ENCODE measurements at regions of chr16 and their contacts with region 1.

Region 1: GRCh38 chr16:55832758-55833540 is at the start of gene CES1:
- DNase-seq: peak; percentile 94 to 95
- H3K4me3 ChIP-seq: peak within 1 kb of the TSS; percentile 45
- H3K4me3 Mint-ChIP-seq: peak within 1 kb of the TSS; percentile 78
- H3K27ac Mint-ChIP-seq: peak within 1 kb of the TSS; percentile 77
- H3K4me1 ChIP-seq: peaks cover 20% of the 10 kb centered on the region
- H3K4me1 Mint-ChIP-seq: peaks cover 42% of the 10 kb centered on the region
- H3K27me3 ChIP-seq: no peaks in the 10 kb centered on the region
- H3K27me3 Mint-ChIP-seq: no peaks in the 10 kb centered on the region
- CTCF ChIP-seq: no peak
- total RNA-seq, gene CES1: 74.1 and 97.4 TPM in 2 replicates

Region 2: GRCh38 chr16:55760310-55761001 is 72.5 kb before region 1 on chr16:
- CTCF ChIA-PET with region 1: no interaction called
- POLR2A ChIA-PET with region 1: interaction called, 4 read pairs
- intact Hi-C with region 1: loop called (anchors 2 kb)
- DNase-seq: peak; percentile 47 to 57
- H3K4me3 ChIP-seq: peak overlapping the region; percentile 18
- H3K4me3 Mint-ChIP-seq: peak overlapping the region; percentile 63
- H3K27ac Mint-ChIP-seq: no peak overlapping the region
- H3K4me1 ChIP-seq: 0 out of 2 replicates have a peak, but pooled peaks cover 4% of the 10 kb centered on the region
- H3K4me1 Mint-ChIP-seq: no peaks in the 10 kb centered on the region
- H3K27me3 ChIP-seq: no peaks in the 10 kb centered on the region
- H3K27me3 Mint-ChIP-seq: peaks cover 17% of the 10 kb centered on the region
- CTCF ChIP-seq: no peak

Region 3: GRCh38 chr16:55876854-55877253 is 43.9 kb after region 1 on chr16:
- CTCF ChIA-PET with region 1: no interaction called
- POLR2A ChIA-PET with region 1: no interaction called
- intact Hi-C with region 1: no loop called
- DNase-seq: no peak
- H3K4me3 ChIP-seq: no peak overlapping the region
- H3K4me3 Mint-ChIP-seq: no peak overlapping the region
- H3K27ac Mint-ChIP-seq: no peak overlapping the region
- H3K4me1 ChIP-seq: no peaks in the 10 kb centered on the region
- H3K4me1 Mint-ChIP-seq: no peaks in the 10 kb centered on the region
- H3K27me3 ChIP-seq: no peaks in the 10 kb centered on the region; the same call in 1 of the 2 replicates
- H3K27me3 Mint-ChIP-seq: peaks cover 11% of the 10 kb centered on the region
- CTCF ChIP-seq: no peak

Region 4: DNA sequence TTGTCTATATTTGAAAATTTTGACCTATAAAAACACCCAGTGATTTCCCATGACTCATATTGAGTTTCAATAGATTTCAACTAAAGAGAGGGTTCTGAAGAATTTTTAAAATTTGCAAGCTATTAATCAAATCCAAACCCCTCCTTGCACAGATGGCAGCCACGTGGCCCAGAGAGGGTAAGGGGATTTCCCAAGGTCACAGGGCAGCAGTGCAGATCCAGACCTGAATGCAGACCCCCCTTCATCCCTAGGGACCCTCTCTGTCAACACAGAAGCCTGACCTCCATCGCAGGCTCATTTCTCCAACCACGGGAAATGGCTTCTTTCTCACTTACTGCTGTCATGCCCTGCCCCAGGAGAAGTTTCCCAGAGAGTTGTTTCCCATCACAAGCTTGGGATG is 66.9 kb after region 1 on chr16:
- CTCF ChIA-PET with region 1: no interaction called
- POLR2A ChIA-PET with region 1: no interaction called
- intact Hi-C with region 1: loop called (anchors 10 kb)
- DNase-seq: no peak
- H3K4me3 ChIP-seq: no peak overlapping the region
- H3K4me3 Mint-ChIP-seq: no peak overlapping the region
- H3K27ac Mint-ChIP-seq: no peak overlapping the region
- H3K4me1 ChIP-seq: no peaks in the 10 kb centered on the region
- H3K4me1 Mint-ChIP-seq: no peaks in the 10 kb centered on the region
- H3K27me3 ChIP-seq: no peaks in the 10 kb centered on the region
- H3K27me3 Mint-ChIP-seq: peaks cover 11% of the 10 kb centered on the region
- CTCF ChIP-seq: no peak